Naive thymus-derived CD8-positive, alpha-beta T cell (primary cell): ENCODE measurements at regions of chr14 and their contacts with region 1.

Region 1: GRCh38 chr14:91244501-91244901 is at the start of gene GPR68:
- DNase-seq: peak in 3 of 10 donors; percentile 20 to 39 (median 38)
- ATAC-seq: peak in 1 of 2 donors; percentile 16
- H3K4me3 Mint-ChIP-seq: peak within 1 kb of the TSS; percentile 70 to 90 (median 84)
- H3K27ac Mint-ChIP-seq: peak within 1 kb of the TSS; percentile 87 to 99 (median 96)
- H3K4me1 Mint-ChIP-seq: peaks cover 48 to 91% (median 76%) of the 10 kb centered on the region in 4 donors
- H3K27me3 Mint-ChIP-seq: no peaks in the 10 kb centered on the region
- polyA plus RNA-seq, gene GPR68: 0.15 to 7.9 (median 0.82) TPM

Region 2: DNA sequence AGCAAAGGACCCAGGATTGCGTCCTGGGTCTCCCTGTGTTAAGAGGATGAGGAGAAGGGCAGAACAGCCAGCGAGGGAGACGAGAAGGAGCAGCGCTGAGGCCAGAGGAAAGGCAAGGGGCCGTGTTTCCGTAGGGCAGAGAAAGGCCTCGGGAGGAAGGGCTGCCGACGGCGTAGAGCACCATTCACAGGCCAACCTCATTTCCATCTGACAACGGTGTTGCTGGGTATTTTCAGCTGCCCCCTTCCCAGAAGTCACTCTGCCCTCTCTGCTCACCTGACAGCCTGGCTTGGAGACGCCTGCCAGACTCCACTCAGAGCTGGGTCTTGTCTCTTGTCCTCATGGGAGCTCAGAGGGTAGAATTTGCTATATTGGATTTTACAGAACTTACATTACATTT is 51.4 kb before region 1 on chr14:
- POLR2A ChIA-PET with region 1: interaction called, 19 read pairs
- DNase-seq: no peak
- ATAC-seq: no peak
- H3K4me3 Mint-ChIP-seq: no peak overlapping the region
- H3K27ac Mint-ChIP-seq: peak overlapping the region in 2 of 10 donors; percentile 19 to 45
- H3K4me1 Mint-ChIP-seq: peaks cover 21 to 32% (median 27%) of the 10 kb centered on the region in 4 donors
- H3K27me3 Mint-ChIP-seq: no peaks in the 10 kb centered on the region

Region 3: GRCh38 chr14:91228112-91229004 is 16.1 kb before region 1 on chr14:
- POLR2A ChIA-PET with region 1: interaction called, 86 read pairs
- DNase-seq: peak; percentile 48 to 78 (median 64)
- ATAC-seq: peak; percentile 78 to 87
- H3K4me3 Mint-ChIP-seq: peak overlapping the region; percentile 26 to 84 (median 69)
- H3K27ac Mint-ChIP-seq: peak overlapping the region; percentile 4 to 95 (median 83)
- H3K4me1 Mint-ChIP-seq: peaks cover 38 to 92% (median 85%) of the 10 kb centered on the region in 4 donors
- H3K27me3 Mint-ChIP-seq: no peaks in the 10 kb centered on the region

Region 4: GRCh38 chr14:91264151-91265150 is 19.9 kb after region 1 on chr14:
- POLR2A ChIA-PET with region 1: interaction called, 23 read pairs
- DNase-seq: peak in 1 of 10 donors; percentile 28
- ATAC-seq: peak; percentile 55 to 70
- H3K4me3 Mint-ChIP-seq: peak overlapping the region; percentile 40 to 85 (median 72)
- H3K27ac Mint-ChIP-seq: peak overlapping the region in 9 of 10 donors; percentile 27 to 88 (median 70)
- H3K4me1 Mint-ChIP-seq: peaks cover 30 to 60% (median 45%) of the 10 kb centered on the region in 4 donors
- H3K27me3 Mint-ChIP-seq: peaks cover 0 to 2% (median 0%) of the 10 kb centered on the region in 5 donors

Region 5: GRCh38 chr14:91305650-91306431 is 61.3 kb after region 1 on chr14:
- POLR2A ChIA-PET with region 1: no interaction called
- DNase-seq: peak in 1 of 10 donors; percentile 44
- ATAC-seq: no peak
- H3K4me3 Mint-ChIP-seq: no peak overlapping the region
- H3K27ac Mint-ChIP-seq: peak overlapping the region in 8 of 10 donors; percentile 20 to 80 (median 56)
- H3K4me1 Mint-ChIP-seq: peaks cover 11 to 61% (median 31%) of the 10 kb centered on the region in 4 donors
- H3K27me3 Mint-ChIP-seq: no peaks in the 10 kb centered on the region